ENCODE measurements at regions of chr12 and their contacts with region 1.

Region 1: GRCh38 chr12:90870971-90871725 is 83.8 kb downstream of the CCER1 start:
- DNase-seq: no peak
- H3K27ac ChIP-seq: no peak overlapping the region
- CTCF ChIP-seq: no peak

Region 2: DNA sequence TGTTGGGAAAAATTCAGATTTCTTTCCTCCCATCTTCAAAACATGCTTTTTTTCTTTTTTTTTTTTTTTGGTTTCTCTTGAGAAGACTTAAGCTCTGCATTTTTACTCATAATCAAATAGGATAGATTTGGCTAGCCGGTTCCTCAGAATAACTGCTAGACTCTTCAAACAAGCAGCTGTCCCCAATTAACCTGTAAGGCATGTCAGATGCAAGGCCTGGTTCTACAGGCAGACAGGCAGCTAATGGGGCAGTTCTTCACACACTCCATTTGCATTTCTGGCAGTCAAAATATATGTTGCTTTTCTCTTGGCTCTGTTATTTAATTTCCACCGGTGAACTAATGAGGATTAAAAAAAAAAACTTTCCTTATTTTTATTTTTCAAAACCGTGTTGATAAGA is 934.5 kb before region 1 on chr12:
- CTCF ChIA-PET with region 1: interaction called, 13 read pairs
- POLR2A ChIA-PET with region 1: no interaction called
- DNase-seq: no peak
- H3K27ac ChIP-seq: no peak overlapping the region
- CTCF ChIP-seq: no peak

Region 3: DNA sequence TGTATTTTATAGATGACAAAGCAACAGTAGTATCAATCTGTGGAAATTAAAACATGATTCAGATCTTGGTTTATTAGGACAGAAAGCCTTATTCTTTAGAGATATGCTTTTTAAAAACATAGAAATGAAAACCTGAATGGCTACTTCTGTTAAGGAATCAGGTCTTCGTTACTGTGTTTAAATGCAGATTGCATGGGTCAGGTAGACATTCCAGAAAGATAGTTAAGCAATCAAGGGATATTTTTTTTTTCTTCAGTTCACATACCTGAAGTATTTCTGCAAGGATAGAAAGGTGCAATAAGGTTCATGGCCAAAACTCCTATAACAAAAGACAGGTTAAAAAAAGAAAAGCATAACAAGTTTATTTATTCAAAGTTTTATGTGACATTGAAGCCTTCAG is 493.9 kb before region 1 on chr12:
- CTCF ChIA-PET with region 1: no interaction called
- POLR2A ChIA-PET with region 1: interaction called, 11 read pairs
- DNase-seq: no peak
- H3K27ac ChIP-seq: no peak overlapping the region
- CTCF ChIP-seq: no peak

Region 4: GRCh38 chr12:90859591-90859990 is 11.6 kb before region 1 on chr12:
- CTCF ChIA-PET with region 1: no interaction called
- POLR2A ChIA-PET with region 1: no interaction called
- DNase-seq: no peak
- H3K27ac ChIP-seq: no peak overlapping the region
- CTCF ChIP-seq: no peak

Measured in RWPE1 (cell line).